ENCODE measurements at regions of chr5 and their contacts with region 1.

Region 1: DNA sequence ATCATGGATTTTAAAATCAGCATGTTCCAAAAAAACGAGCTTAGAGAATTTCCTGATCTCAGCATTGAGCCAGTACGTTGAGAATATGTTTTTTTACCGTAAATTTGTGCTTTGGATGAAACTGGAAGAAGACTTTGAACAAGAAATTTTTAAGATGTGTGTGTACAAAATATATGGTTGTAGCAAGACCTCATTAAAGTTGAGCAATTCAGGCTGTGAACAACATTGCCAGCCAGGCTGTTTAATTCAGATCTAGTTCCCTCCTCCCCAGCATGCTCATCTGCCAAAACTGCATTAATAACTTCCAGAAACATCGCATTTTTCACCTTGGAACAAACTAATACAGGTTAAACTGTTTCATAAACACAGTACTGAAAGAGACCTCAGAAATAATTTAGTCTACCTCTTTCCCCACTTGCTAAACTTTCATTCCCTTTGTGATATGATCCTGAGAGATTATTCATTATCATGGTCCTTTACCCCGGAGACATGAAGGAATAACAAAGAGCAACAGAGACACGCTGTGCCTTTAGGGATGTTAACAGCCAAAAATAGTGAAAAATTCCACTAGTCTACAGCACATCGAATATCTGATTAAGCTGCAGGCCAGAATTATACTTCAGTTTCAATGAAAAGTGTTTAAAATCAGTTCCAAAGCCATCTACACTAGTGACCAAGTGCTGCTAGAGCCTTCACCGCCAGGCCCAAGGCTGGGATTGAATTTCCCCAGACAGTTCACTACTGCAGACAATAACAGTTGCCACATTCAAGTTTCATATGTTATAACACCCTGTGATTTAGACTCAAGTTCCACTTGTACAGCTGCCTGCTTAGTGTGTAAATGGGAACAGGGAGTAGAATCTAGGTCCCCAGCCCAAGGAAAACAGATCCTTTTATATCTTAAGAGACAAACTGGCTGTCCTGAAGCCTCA is 89.6 kb downstream of the EFNA5 start:
- DNase-seq: peak; percentile 80
- H3K4me3 Mint-ChIP-seq: peak overlapping the region; percentile 61
- H3K27ac Mint-ChIP-seq: peak overlapping the region; percentile 74
- H3K4me1 Mint-ChIP-seq: peaks cover 42% of the 10 kb centered on the region
- H3K27me3 Mint-ChIP-seq: no peaks in the 10 kb centered on the region
- CTCF ChIP-seq: no peak

Region 2: GRCh38 chr5:107456281-107456715 is 124.9 kb before region 1 on chr5:
- CTCF ChIA-PET with region 1: no interaction called
- POLR2A ChIA-PET with region 1: interaction called, 20 read pairs
- intact Hi-C with region 1: no loop called
- DNase-seq: peak; percentile 76
- H3K4me3 Mint-ChIP-seq: peak overlapping the region; percentile 6
- H3K27ac Mint-ChIP-seq: peak overlapping the region; percentile 64
- H3K4me1 Mint-ChIP-seq: peaks cover 56% of the 10 kb centered on the region
- H3K27me3 Mint-ChIP-seq: no peaks in the 10 kb centered on the region
- CTCF ChIP-seq: no peak

Region 3: DNA sequence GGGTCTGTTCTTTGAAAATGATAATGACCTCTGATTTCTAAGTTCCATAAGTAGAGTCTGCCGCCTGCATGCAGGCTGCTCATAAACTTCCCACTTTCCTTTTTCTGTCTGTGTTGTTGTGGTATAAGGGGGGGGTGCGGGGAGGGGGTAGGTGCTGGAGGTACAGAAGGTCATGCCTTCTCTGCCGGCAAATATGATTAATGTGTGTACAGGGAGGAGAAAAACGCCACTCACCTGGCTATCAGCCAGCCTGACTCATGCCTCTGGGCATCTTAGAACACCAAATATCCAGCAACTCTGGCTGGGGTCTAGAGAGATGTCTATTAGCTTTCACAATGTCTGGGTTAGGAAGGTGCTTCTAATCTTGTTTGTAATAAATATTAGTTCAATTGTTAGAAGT is 38.7 kb before region 1 on chr5:
- CTCF ChIA-PET with region 1: interaction called, 13 read pairs
- POLR2A ChIA-PET with region 1: interaction called, 174 read pairs
- intact Hi-C with region 1: no loop called
- DNase-seq: peak; percentile 99
- H3K4me3 Mint-ChIP-seq: peak overlapping the region; percentile 64
- H3K27ac Mint-ChIP-seq: peak overlapping the region; percentile 92
- H3K4me1 Mint-ChIP-seq: peaks cover 46% of the 10 kb centered on the region
- H3K27me3 Mint-ChIP-seq: no peaks in the 10 kb centered on the region
- CTCF ChIP-seq: no peak

Region 4: GRCh38 chr5:107594253-107595045 is 13.3 kb after region 1 on chr5:
- CTCF ChIA-PET with region 1: interaction called, 4 read pairs
- POLR2A ChIA-PET with region 1: interaction called, 28 read pairs
- intact Hi-C with region 1: no loop called
- DNase-seq: peak; percentile 63
- H3K4me3 Mint-ChIP-seq: peak overlapping the region; percentile 57
- H3K27ac Mint-ChIP-seq: peak overlapping the region; percentile 84
- H3K4me1 Mint-ChIP-seq: peaks cover 25% of the 10 kb centered on the region
- H3K27me3 Mint-ChIP-seq: no peaks in the 10 kb centered on the region
- CTCF ChIP-seq: no peak

Region 5: DNA sequence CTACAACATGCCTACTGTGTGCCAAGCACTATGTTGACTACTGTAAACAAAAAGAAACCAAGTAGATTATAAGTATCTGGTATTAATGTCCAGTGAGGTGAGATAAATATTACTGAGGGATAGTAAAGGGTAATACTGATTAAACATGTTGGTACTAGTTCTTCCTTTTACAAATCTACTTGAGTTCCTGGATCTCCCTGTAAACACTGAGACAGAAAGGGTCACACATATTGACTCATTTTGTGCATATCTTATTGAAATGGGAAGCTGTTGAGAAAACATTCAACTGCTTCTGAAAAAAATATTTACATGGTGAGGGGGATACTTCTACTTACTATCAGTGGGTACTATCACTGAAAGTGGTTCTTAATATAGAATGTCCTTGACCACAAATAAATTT is 65.3 kb after region 1 on chr5:
- CTCF ChIA-PET with region 1: interaction called, 3 read pairs
- POLR2A ChIA-PET with region 1: interaction called, 16 read pairs
- intact Hi-C with region 1: no loop called
- DNase-seq: no peak
- H3K4me3 Mint-ChIP-seq: no peak overlapping the region
- H3K27ac Mint-ChIP-seq: peak overlapping the region; percentile 31
- H3K4me1 Mint-ChIP-seq: peaks cover 13% of the 10 kb centered on the region
- H3K27me3 Mint-ChIP-seq: no peaks in the 10 kb centered on the region
- CTCF ChIP-seq: no peak

Region 6: DNA sequence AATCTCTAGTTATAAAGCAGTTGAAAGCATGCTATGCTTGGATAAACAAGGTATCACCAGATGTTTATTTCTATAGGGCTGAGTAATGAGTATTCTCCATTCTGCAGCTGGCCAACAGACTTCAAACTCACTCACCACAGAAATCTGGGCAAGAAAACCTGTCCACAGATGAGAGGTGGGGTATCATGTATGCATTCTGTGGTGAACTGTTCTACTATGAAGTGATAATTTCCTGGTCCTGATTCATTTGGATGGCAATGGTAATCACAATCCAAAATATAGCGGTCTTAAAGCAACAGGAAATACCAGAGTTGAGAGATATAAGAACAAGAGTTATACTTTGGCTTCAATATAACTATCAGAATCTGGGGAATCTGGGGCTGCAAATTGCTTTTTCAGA is 155.5 kb after region 1 on chr5:
- CTCF ChIA-PET with region 1: no interaction called
- POLR2A ChIA-PET with region 1: no interaction called
- intact Hi-C with region 1: no loop called
- DNase-seq: no peak
- H3K4me3 Mint-ChIP-seq: no peak overlapping the region
- H3K27ac Mint-ChIP-seq: no peak overlapping the region
- H3K4me1 Mint-ChIP-seq: peaks cover 5% of the 10 kb centered on the region
- H3K27me3 Mint-ChIP-seq: no peaks in the 10 kb centered on the region
- CTCF ChIP-seq: no peak